Prostate gland (tissue), 2 donors: ENCODE measurements at regions of chr13 and their contacts with region 1.

Region 1: GRCh38 chr13:94601446-94602431 is at the start of gene GPR180:
- DNase-seq: peak; percentile 98
- H3K4me3 ChIP-seq: peak within 1 kb of the TSS; percentile 90 to 95
- H3K27ac ChIP-seq: peak within 1 kb of the TSS; percentile 84 to 89
- H3K4me1 ChIP-seq: no peaks in the 10 kb centered on the region
- H3K27me3 ChIP-seq: no peaks in the 10 kb centered on the region
- CTCF ChIP-seq: no peak
- POLR2A ChIP-seq: peak; percentile 72
- total RNA-seq, gene GPR180: 2.7 to 5.4 TPM

Region 2: GRCh38 chr13:94549232-94550061 is 52.3 kb before region 1 on chr13:
- intact Hi-C with region 1: loop called (anchors 2 kb)
- DNase-seq: peak; percentile 94
- H3K4me3 ChIP-seq: peak overlapping the region; percentile 52 to 53
- H3K27ac ChIP-seq: peak overlapping the region; percentile 88 to 89
- H3K4me1 ChIP-seq: no peaks in the 10 kb centered on the region
- H3K27me3 ChIP-seq: no peaks in the 10 kb centered on the region
- CTCF ChIP-seq: peak in 1 of 4 experiments; percentile 16
- POLR2A ChIP-seq: peak; percentile 10